ENCODE measurements at regions of chr15 and their contacts with region 1.

Region 1: DNA sequence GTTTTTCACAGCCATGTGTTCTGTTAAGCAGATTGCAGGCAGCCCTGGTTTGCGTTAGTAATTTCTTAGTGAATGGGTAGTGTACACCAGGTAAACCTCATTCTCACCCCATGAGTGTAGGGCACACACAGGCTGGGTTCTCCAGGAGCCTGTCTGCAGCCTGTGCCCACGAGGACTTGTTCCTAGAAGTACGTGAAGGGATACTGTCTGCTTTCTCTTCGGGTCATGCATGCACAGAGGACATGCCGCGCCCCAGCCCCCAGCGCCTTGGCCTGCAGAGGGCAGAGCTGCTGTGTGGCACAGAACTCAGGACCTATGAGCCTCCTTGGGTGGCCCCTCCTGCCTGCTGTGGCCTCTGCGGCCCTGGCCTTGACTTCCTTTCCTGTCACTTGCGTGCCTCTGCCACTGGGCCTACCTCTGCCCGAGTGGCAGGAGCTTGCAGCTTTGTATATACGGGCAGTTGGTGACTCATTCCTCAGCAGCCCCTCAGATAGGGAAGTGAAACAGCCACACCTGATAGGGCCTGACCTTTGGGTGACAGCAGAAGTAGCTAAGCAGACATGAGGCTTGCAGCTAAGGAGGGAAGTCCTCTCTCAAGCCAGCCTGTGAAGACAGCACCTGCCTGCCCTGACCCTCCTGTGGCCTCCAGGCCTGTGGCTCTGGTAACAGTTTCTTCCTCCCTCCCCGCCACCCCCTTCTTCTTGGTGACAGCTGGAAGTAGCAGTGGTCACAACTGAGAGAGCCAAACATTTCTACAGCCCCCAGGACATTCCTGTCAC is 19.5 kb downstream of the PPCDC start:
- DNase-seq: peak; percentile 97
- ATAC-seq: peak; percentile 86
- H3K4me3 Mint-ChIP-seq: peak overlapping the region; percentile 59
- H3K27ac Mint-ChIP-seq: peak overlapping the region; percentile 92
- H3K4me1 Mint-ChIP-seq: peaks cover 83% of the 10 kb centered on the region
- H3K27me3 Mint-ChIP-seq: no peaks in the 10 kb centered on the region

Region 2: DNA sequence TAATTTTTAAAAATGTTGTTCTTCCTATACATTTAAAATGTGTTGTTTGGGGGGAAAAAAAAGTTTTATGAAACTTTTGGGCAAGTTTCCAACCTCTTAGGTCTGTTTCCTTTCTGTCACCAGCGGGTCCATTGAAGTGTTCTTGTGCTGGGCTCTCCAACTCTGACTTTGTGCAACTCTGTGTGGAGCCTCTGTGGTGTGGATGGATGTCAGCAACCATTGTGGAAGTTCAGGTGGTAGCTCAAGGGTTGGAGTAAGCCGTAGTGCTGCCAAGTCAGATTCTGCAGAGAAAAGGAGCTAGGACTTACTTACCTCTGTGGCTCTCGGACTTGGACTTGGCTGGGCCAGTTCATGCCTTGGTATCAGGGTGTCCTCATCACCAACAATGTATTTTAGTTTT is 479.5 kb before region 1 on chr15:
- CTCF ChIA-PET with region 1: no interaction called
- DNase-seq: no peak
- ATAC-seq: no peak
- H3K4me3 Mint-ChIP-seq: no peak overlapping the region
- H3K27ac Mint-ChIP-seq: no peak overlapping the region
- H3K4me1 Mint-ChIP-seq: peaks cover 39% of the 10 kb centered on the region
- H3K27me3 Mint-ChIP-seq: no peaks in the 10 kb centered on the region

Region 3: DNA sequence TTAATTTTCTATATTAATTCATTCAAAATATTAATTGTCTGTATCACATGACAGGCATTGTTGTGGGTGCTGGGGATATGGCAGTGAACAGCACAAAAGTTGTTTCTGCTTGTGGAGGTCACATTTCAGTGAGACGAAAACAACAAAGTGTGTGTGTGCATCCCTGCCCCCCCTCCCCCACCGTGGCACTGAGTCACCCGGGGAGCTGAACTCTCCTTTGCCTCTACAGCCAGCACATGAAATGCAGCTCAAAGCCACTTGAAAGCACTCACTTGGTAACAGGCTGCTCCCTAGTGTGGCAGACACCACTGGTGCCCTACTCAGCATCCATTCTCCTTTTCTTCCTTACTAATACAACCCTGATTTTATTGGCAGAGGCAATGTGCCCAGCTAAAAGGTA is 64.4 kb before region 1 on chr15:
- CTCF ChIA-PET with region 1: no interaction called
- DNase-seq: peak; percentile 58
- ATAC-seq: no peak
- H3K4me3 Mint-ChIP-seq: no peak overlapping the region
- H3K27ac Mint-ChIP-seq: no peak overlapping the region
- H3K4me1 Mint-ChIP-seq: peaks cover 17% of the 10 kb centered on the region
- H3K27me3 Mint-ChIP-seq: peaks cover 12% of the 10 kb centered on the region

Region 4: GRCh38 chr15:75023181-75023871 is 19.6 kb before region 1 on chr15 and contains the start of gene PPCDC:
- CTCF ChIA-PET with region 1: interaction called, 23 read pairs
- DNase-seq: peak; percentile 98
- ATAC-seq: peak; percentile 100
- H3K4me3 Mint-ChIP-seq: peak within 1 kb of the TSS; percentile 90
- H3K27ac Mint-ChIP-seq: peak within 1 kb of the TSS; percentile 89
- H3K4me1 Mint-ChIP-seq: peaks cover 19% of the 10 kb centered on the region
- H3K27me3 Mint-ChIP-seq: no peaks in the 10 kb centered on the region
- total RNA-seq, gene PPCDC: 36.3 to 36.7 TPM

Region 5: GRCh38 chr15:75069301-75069925 is 26.5 kb after region 1 on chr15:
- CTCF ChIA-PET with region 1: interaction called, 38 read pairs
- DNase-seq: no peak
- ATAC-seq: no peak
- H3K4me3 Mint-ChIP-seq: no peak overlapping the region
- H3K27ac Mint-ChIP-seq: peak overlapping the region; percentile 39
- H3K4me1 Mint-ChIP-seq: peaks cover 60% of the 10 kb centered on the region
- H3K27me3 Mint-ChIP-seq: no peaks in the 10 kb centered on the region

Region 6: DNA sequence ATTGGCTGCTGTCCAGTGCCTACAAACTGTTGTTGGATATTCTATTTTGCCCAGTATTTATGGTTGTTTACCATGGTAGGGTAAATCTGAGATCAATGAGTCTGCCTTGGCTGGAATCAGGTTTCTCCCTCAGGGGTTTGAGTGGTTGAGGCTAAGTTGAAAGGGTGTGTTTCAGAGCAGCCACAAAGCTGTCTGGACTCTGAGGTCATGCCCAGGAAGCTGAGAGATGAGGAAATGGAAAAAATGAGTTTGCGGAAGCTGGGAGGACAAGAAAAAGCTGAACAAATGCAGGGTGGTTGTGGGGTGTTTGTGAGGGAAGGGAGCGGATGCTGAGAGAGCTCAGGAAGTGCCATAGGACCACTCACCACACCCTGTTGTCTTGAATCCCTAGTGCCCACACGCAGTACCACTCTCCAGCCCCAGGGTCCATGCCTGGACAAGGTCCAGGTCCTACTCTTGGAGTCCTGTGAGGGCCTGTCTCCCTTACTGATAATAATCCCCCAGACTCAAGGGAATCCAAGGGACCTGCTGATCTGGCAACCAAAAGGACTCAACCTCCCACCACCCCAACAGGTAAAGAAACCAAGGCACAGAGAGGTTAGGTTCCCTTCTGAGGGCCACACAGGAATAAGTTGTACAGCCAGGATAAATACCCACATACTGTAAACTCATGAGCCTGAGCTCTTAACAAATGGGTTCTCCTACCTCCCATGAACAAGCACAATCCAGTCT is 62.1 kb after region 1 on chr15:
- CTCF ChIA-PET with region 1: interaction called, 16 read pairs
- DNase-seq: peak; percentile 72
- ATAC-seq: peak; percentile 29
- H3K4me3 Mint-ChIP-seq: no peak overlapping the region
- H3K27ac Mint-ChIP-seq: peak overlapping the region; percentile 83
- H3K4me1 Mint-ChIP-seq: peaks cover 42% of the 10 kb centered on the region
- H3K27me3 Mint-ChIP-seq: peaks cover 18% of the 10 kb centered on the region

Region 7: DNA sequence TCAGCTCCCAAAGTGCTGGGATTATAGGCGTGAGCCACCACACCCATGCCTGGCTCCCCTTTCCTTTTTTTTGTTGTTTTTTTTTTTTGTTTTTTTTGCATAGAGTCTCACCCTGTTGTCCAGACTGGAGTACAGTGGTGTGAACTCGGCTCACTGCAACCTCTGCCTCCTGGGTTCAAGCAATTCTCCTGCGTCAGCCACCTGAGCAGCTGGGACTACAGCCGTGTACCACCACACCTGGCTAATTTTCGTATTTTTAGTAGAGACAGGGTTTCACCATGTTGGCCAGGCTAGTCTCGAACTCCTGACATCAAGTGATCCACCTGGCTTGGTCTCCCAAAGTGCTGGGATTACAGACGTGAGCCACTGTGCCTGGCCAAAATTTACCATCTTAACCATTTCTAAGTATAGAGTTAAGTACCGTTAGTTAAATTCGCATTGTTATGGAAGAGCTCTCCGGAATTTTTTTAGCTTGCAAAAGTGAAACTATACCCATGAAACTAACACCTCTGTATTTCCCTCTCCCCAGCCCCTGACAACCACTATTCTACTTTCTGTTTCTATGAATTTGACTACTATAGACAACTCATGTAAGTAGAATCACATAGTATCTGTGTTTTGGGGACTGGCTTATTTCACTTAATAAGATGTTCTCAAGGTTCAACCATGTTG is 87.8 kb after region 1 on chr15:
- CTCF ChIA-PET with region 1: interaction called, 21 read pairs
- DNase-seq: peak; percentile 47
- ATAC-seq: peak; percentile 97
- H3K4me3 Mint-ChIP-seq: peak overlapping the region; percentile 72
- H3K27ac Mint-ChIP-seq: peak overlapping the region; percentile 79
- H3K4me1 Mint-ChIP-seq: peaks cover 32% of the 10 kb centered on the region
- H3K27me3 Mint-ChIP-seq: peaks cover 32% of the 10 kb centered on the region

Region 8: GRCh38 chr15:75195122-75195765 is 152.3 kb after region 1 on chr15:
- CTCF ChIA-PET with region 1: interaction called, 29 read pairs
- DNase-seq: no peak
- ATAC-seq: no peak
- H3K4me3 Mint-ChIP-seq: no peak overlapping the region
- H3K27ac Mint-ChIP-seq: no peak overlapping the region
- H3K4me1 Mint-ChIP-seq: peaks cover 23% of the 10 kb centered on the region
- H3K27me3 Mint-ChIP-seq: no peaks in the 10 kb centered on the region

Region 9: GRCh38 chr15:75215107-75216004 is 172.4 kb after region 1 on chr15:
- CTCF ChIA-PET with region 1: interaction called, 12 read pairs
- DNase-seq: no peak
- ATAC-seq: no peak
- H3K4me3 Mint-ChIP-seq: no peak overlapping the region
- H3K27ac Mint-ChIP-seq: no peak overlapping the region
- H3K4me1 Mint-ChIP-seq: peaks cover 10% of the 10 kb centered on the region
- H3K27me3 Mint-ChIP-seq: no peaks in the 10 kb centered on the region

Region 10: DNA sequence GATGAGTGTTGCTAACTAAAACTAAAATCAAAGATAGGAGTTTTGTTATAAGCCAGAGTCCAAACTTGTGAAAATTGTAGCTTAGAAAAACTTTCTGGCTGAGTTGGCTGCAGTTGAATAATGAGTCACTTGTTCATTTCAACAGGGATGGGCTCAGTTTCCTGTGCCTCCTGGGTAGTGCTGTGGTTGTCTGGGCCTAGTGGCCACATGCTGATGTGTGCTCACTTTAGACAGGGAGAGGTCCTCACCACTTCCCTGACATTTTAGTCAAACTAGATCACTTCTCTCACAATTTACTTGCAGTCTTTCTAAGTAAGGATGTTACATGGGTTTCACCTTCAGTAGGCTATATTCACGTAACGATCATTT is 794.0 kb after region 1 on chr15:
- CTCF ChIA-PET with region 1: no interaction called
- DNase-seq: peak; percentile 92
- ATAC-seq: peak; percentile 96
- H3K4me3 Mint-ChIP-seq: no peak overlapping the region
- H3K27ac Mint-ChIP-seq: no peak overlapping the region
- H3K4me1 Mint-ChIP-seq: peaks cover 12% of the 10 kb centered on the region
- H3K27me3 Mint-ChIP-seq: peaks cover 14% of the 10 kb centered on the region